ENCODE measurements at regions of chr7 and their contacts with region 1.

Region 1: DNA sequence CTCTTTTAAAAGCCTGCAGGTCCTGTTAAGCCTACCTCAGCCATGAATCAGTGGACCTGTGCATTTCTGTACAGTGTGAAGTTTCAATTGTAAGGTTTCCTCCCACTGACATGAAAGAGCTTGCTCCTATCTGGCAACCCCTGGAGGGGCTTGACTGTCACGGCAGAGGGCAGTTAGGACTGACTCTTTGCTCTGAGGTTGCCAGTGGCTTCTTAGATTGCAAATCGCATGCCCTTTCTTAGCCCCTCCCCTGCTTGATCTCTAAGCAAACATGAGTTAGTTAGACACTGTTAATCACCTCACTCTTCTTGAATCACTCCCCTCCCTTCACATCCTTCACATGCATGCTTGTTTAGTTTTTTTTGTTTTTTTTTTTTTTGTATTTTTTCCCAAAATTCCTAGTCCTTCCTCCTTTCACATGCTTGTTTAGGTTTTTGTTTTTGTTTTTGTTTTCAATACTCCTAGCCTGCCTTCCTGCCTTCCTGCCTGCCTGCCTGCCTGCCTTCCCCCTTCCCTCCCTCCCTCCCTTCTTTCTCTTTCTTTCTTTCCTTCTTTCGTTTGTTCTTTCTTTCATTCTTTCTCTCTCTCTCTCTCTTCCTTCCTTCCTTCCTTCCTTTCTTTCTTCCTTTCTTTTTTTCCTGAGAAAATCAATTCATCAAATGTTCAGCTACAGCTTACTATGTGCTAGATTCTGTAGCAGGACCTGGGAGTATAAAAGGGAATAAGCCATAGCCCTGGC is 6.0 kb upstream of the HIPK2 start:
- DNase-seq: no peak
- ATAC-seq: no peak
- H3K4me3 ChIP-seq: no peak overlapping the region
- H3K27ac ChIP-seq: no peak overlapping the region
- H3K4me1 ChIP-seq: no peaks in the 10 kb centered on the region
- H3K27me3 ChIP-seq: no peaks in the 10 kb centered on the region

Region 2: GRCh38 chr7:139218173-139218572 is 565.6 kb before region 1 on chr7:
- intact Hi-C with region 1: no loop called
- DNase-seq: no peak
- ATAC-seq: no peak
- H3K4me3 ChIP-seq: no peak overlapping the region
- H3K27ac ChIP-seq: no peak overlapping the region
- H3K4me1 ChIP-seq: no peaks in the 10 kb centered on the region
- H3K27me3 ChIP-seq: no peaks in the 10 kb centered on the region

Region 3: DNA sequence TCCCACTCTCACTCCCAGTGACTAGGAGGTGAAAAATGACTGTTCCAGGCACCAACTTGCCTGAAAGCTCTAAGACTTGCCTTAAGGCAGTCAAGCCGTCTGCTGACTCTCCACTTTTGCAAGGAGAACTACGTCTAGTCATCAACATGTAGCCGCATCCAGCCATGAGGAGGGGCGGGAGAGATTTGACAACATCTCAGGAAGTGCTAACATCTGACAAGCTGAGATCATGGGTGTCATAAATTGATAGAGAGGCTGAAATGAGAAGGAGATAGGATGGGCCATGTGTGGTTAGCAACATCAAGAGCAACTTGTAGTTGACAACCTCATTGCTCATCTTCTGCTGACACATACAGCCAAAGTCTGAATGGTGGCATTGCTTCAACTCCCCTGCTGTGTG is 36.3 kb after region 1 on chr7:
- intact Hi-C with region 1: no loop called
- DNase-seq: peak in 1 of 2 donors; percentile 53
- ATAC-seq: no peak
- H3K4me3 ChIP-seq: no peak overlapping the region
- H3K27ac ChIP-seq: no peak overlapping the region
- H3K4me1 ChIP-seq: no peaks in the 10 kb centered on the region
- H3K27me3 ChIP-seq: no peaks in the 10 kb centered on the region

Region 4: DNA sequence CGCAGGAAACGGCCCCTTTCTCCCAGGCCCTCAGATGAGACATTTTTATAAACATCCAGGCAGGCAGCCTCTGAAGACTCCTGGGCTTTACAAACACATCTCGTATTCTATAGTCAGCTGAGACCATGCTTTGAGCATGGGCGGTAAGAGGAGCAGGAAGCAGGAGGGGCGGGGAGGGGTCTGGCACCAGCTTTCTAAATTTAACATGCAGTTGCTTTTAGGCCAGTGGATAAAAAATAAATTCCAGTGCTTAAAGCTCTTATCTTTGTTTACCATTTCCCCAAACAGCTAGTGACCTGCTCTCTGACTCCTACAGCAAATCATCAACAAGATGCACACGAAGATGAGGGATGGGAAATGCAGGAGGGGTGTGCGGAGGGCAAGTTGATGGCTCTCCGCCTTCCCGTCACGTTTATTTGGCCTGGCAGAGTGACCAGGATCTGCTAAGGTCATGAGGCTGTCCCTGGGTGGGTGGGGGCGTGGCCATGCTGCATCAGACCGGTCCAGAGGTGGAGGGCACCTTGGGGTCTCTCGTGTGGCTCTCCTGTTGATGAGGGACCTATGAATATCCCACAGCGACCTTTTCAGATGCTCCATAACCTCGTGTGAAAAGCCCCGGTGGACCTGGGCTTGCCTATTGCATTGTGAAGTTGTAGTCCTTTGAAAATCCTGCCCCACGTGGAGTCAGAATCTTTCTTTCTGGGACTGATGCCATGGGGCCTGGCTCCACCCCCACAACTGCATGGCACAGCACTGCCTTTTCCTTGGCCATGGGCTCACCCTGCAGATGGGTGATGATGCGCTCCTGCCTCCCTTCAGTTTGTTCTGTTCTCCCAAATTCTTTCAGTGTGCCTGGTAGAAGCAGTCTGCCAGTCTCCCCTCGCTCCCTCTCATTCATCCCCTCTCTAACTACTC is 211.5 kb after region 1 on chr7:
- intact Hi-C with region 1: loop called (anchors 5 to 10 kb)
- DNase-seq: no peak
- ATAC-seq: no peak
- H3K4me3 ChIP-seq: no peak overlapping the region
- H3K27ac ChIP-seq: no peak overlapping the region
- H3K4me1 ChIP-seq: no peaks in the 10 kb centered on the region
- H3K27me3 ChIP-seq: no peaks in the 10 kb centered on the region